IMR-90 (cell line): ENCODE measurements at regions of chr1 and their contacts with region 1.

Region 1: GRCh38 chr1:2314803-2315673 is 76.3 kb downstream of the MORN1 start:
- DNase-seq: peak; percentile 39
- ATAC-seq: peak; percentile 65
- H3K4me3 ChIP-seq: peak overlapping the region; percentile 44
- H3K27ac ChIP-seq: peak overlapping the region; percentile 68
- H3K4me1 ChIP-seq: peaks cover 32% of the 10 kb centered on the region
- H3K27me3 ChIP-seq: no peaks in the 10 kb centered on the region
- CTCF ChIP-seq: peak; percentile 47
- POLR2A ChIP-seq: no peak
- RAD21 ChIP-seq: no peak; the same call in 1 of the 2 replicates

Region 2: GRCh38 chr1:2381741-2382620 is 66.9 kb after region 1 on chr1:
- CTCF ChIA-PET with region 1: interaction called, 8 read pairs
- POLR2A ChIA-PET with region 1: no interaction called
- dilution Hi-C with region 1: no loop called
- in situ Hi-C with region 1: no loop called
- intact Hi-C with region 1: loop called (anchors 5 kb)
- DNase-seq: peak; percentile 70
- ATAC-seq: peak; percentile 99
- H3K4me3 ChIP-seq: no peak overlapping the region
- H3K27ac ChIP-seq: no peak overlapping the region
- H3K4me1 ChIP-seq: no peaks in the 10 kb centered on the region
- H3K27me3 ChIP-seq: no peaks in the 10 kb centered on the region
- CTCF ChIP-seq: peak; percentile 97
- POLR2A ChIP-seq: no peak
- RAD21 ChIP-seq: peak; percentile 99